CD4-positive, alpha-beta T cell (primary cell): ENCODE measurements at regions of chr18 and their contacts with region 1.

Region 1: GRCh38 chr18:44651453-44651852 is 29.2 kb upstream of the SETBP1 start:
- DNase-seq: no peak
- ATAC-seq: no peak
- H3K4me3 ChIP-seq: no peak overlapping the region
- H3K4me3 Mint-ChIP-seq: no peak overlapping the region
- H3K27ac ChIP-seq: no peak overlapping the region
- H3K27ac Mint-ChIP-seq: no peak overlapping the region
- H3K4me1 ChIP-seq: no peaks in the 10 kb centered on the region
- H3K4me1 Mint-ChIP-seq: no peaks in the 10 kb centered on the region
- H3K27me3 ChIP-seq: peaks cover 0 to 4% of the 10 kb centered on the region in 2 experiments
- H3K27me3 Mint-ChIP-seq: no peaks in the 10 kb centered on the region
- CTCF ChIP-seq: no peak

Region 2: DNA sequence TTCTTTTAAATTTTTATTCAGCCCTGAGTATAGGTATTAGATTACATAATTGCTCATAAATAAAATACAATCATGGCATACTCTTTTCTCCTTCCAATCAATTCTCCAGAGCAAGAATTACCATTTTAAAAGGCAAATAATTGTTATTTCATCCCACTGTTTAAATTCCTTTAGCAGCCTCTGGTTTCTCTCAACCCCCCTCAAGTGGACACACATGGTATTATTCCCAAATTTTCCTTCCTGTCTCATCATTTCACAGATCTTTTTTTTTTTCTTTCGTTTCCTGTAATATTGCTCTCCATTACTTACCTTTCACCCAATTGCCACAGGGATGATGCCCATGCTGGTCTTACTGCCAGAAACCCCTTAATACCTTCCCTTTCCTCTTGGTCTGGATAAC is 1921.2 kb before region 1 on chr18:
- CTCF ChIA-PET with region 1: no interaction called
- POLR2A ChIA-PET with region 1: no interaction called
- intact Hi-C with region 1: no loop called
- DNase-seq: no peak
- ATAC-seq: no peak
- H3K4me3 ChIP-seq: no peak overlapping the region
- H3K4me3 Mint-ChIP-seq: no peak overlapping the region
- H3K27ac ChIP-seq: no peak overlapping the region
- H3K27ac Mint-ChIP-seq: no peak overlapping the region
- H3K4me1 ChIP-seq: no peaks in the 10 kb centered on the region
- H3K4me1 Mint-ChIP-seq: no peaks in the 10 kb centered on the region
- H3K27me3 ChIP-seq: no peaks in the 10 kb centered on the region
- H3K27me3 Mint-ChIP-seq: no peaks in the 10 kb centered on the region
- CTCF ChIP-seq: no peak

Region 3: GRCh38 chr18:44298566-44298965 is 352.9 kb before region 1 on chr18:
- CTCF ChIA-PET with region 1: no interaction called
- POLR2A ChIA-PET with region 1: no interaction called
- intact Hi-C with region 1: no loop called
- DNase-seq: no peak
- ATAC-seq: no peak
- H3K4me3 ChIP-seq: no peak overlapping the region
- H3K4me3 Mint-ChIP-seq: no peak overlapping the region
- H3K27ac ChIP-seq: no peak overlapping the region
- H3K27ac Mint-ChIP-seq: no peak overlapping the region
- H3K4me1 ChIP-seq: no peaks in the 10 kb centered on the region
- H3K4me1 Mint-ChIP-seq: no peaks in the 10 kb centered on the region
- H3K27me3 ChIP-seq: no peaks in the 10 kb centered on the region
- H3K27me3 Mint-ChIP-seq: no peaks in the 10 kb centered on the region
- CTCF ChIP-seq: no peak

Region 4: GRCh38 chr18:44594799-44595467 is 56.5 kb before region 1 on chr18:
- CTCF ChIA-PET with region 1: no interaction called
- POLR2A ChIA-PET with region 1: no interaction called
- intact Hi-C with region 1: loop called in 1 of 2 experiments (anchors 10 kb)
- DNase-seq: no peak
- ATAC-seq: no peak
- H3K4me3 ChIP-seq: no peak overlapping the region
- H3K4me3 Mint-ChIP-seq: no peak overlapping the region
- H3K27ac ChIP-seq: no peak overlapping the region
- H3K27ac Mint-ChIP-seq: no peak overlapping the region
- H3K4me1 ChIP-seq: no peaks in the 10 kb centered on the region
- H3K4me1 Mint-ChIP-seq: no peaks in the 10 kb centered on the region
- H3K27me3 ChIP-seq: no peaks in the 10 kb centered on the region
- H3K27me3 Mint-ChIP-seq: peaks cover 7% of the 10 kb centered on the region
- CTCF ChIP-seq: no peak

Region 5: GRCh38 chr18:44958455-44958854 is 307.0 kb after region 1 on chr18:
- CTCF ChIA-PET with region 1: no interaction called
- POLR2A ChIA-PET with region 1: no interaction called
- intact Hi-C with region 1: no loop called
- DNase-seq: no peak
- ATAC-seq: no peak
- H3K4me3 ChIP-seq: no peak overlapping the region
- H3K4me3 Mint-ChIP-seq: no peak overlapping the region
- H3K27ac ChIP-seq: no peak overlapping the region
- H3K27ac Mint-ChIP-seq: no peak overlapping the region
- H3K4me1 ChIP-seq: no peaks in the 10 kb centered on the region
- H3K4me1 Mint-ChIP-seq: no peaks in the 10 kb centered on the region
- H3K27me3 ChIP-seq: no peaks in the 10 kb centered on the region
- H3K27me3 Mint-ChIP-seq: no peaks in the 10 kb centered on the region
- CTCF ChIP-seq: no peak

Region 6: GRCh38 chr18:45738658-45739057 is 1087.2 kb after region 1 on chr18:
- CTCF ChIA-PET with region 1: no interaction called
- POLR2A ChIA-PET with region 1: no interaction called
- intact Hi-C with region 1: no loop called
- DNase-seq: no peak
- ATAC-seq: no peak
- H3K4me3 ChIP-seq: no peak overlapping the region
- H3K4me3 Mint-ChIP-seq: no peak overlapping the region
- H3K27ac ChIP-seq: no peak overlapping the region
- H3K27ac Mint-ChIP-seq: no peak overlapping the region
- H3K4me1 ChIP-seq: no peaks in the 10 kb centered on the region
- H3K4me1 Mint-ChIP-seq: no peaks in the 10 kb centered on the region
- H3K27me3 ChIP-seq: no peaks in the 10 kb centered on the region
- H3K27me3 Mint-ChIP-seq: no peaks in the 10 kb centered on the region
- CTCF ChIP-seq: no peak